Panc1 (cell line): ENCODE measurements at regions of chr3 and their contacts with region 1.

Region 1: DNA sequence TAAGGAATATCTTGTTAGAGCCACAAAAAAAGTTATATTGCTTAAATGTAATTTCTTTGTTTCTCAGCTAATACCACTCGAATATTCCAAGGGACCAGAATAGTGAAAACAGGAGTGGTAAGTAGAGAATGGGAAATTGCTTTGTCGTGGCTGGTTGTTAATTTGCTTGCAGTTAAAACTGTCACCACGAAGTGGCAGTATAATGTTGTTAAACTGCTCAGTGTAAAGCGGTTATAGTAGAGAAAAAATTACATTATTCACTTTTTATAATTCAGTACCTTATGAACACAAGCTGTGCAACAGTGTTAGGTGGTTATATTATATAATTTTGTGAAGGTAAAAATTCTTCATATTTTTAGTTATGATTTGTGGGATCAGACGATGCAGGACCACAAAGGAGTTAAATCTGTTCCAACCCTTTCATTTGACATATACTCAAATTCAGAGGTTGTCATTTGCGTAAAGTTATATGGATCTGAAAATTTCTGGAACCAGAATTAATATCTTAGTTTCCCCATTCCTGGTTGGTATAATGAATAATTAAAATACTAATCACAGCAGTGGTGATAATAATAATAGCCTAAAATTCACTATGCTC is 171.8 kb downstream of the FEZF2 start:
- DNase-seq: peak; percentile 8
- ATAC-seq: peak; percentile 56; the same call in 1 of the 2 replicates
- H3K4me3 ChIP-seq: no peak overlapping the region
- H3K27ac ChIP-seq: no peak overlapping the region
- H3K4me1 ChIP-seq: no peaks in the 10 kb centered on the region
- H3K27me3 ChIP-seq: no peaks in the 10 kb centered on the region
- CTCF ChIP-seq: peak; percentile 58; the same call in 1 of the 2 replicates

Region 2: DNA sequence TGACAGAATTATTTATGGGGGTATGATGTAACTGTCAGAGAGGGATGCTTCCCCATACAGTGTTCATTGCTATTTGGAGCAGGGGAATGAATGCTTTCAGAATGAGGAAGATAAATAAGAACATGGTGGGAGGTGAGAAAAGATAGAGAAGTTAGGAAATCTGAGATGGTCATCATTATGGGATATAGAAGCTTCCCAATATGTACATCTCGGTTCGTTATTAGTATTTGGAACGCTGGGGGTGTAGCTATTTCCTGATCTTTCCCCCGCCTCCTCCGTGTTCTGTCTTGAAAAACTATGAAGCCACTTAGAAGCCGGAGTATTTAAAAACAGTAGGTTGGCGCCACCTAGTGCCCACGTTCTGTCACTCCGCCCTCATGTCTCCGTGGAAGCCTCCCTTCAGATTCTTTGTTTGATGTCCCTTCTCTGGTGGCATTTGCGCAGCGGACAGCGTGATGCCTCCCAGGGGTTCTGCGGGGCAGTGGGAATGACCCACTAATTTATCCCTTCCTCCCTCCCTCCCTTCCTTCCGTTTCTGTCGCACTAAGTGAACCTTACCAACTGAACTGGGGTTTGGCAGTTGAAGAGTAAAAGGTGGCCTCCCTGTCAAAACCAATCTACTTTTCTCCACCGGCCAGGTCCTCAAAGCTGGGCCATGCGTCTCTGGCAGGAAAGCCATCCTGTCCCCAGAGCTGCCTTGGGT is 12.7 kb before region 1 on chr3:
- CTCF ChIA-PET with region 1: no interaction called
- POLR2A ChIA-PET with region 1: no interaction called
- in situ Hi-C with region 1: no loop called
- intact Hi-C with region 1: no loop called
- DNase-seq: peak; percentile 33
- ATAC-seq: peak; percentile 85
- H3K4me3 ChIP-seq: no peak overlapping the region
- H3K27ac ChIP-seq: no peak overlapping the region
- H3K4me1 ChIP-seq: no peaks in the 10 kb centered on the region
- H3K27me3 ChIP-seq: no peaks in the 10 kb centered on the region
- CTCF ChIP-seq: peak; percentile 79

Region 3: GRCh38 chr3:62558549-62559112 is 357.1 kb after region 1 on chr3:
- CTCF ChIA-PET with region 1: no interaction called
- POLR2A ChIA-PET with region 1: no interaction called
- in situ Hi-C with region 1: no loop called
- intact Hi-C with region 1: loop called (anchors 1 kb)
- DNase-seq: no peak
- ATAC-seq: no peak
- H3K4me3 ChIP-seq: no peak overlapping the region
- H3K27ac ChIP-seq: no peak overlapping the region
- H3K4me1 ChIP-seq: no peaks in the 10 kb centered on the region
- H3K27me3 ChIP-seq: no peaks in the 10 kb centered on the region
- CTCF ChIP-seq: peak; percentile 73